Right ventricle myocardium superior (tissue), 1 donor: ENCODE measurements at regions of chr15 and their contacts with region 1.

Region 1: GRCh38 chr15:62071711-62072308 is 5.0 kb downstream of the C2CD4A start:
- DNase-seq: no peak
- ATAC-seq: no peak

Region 2: DNA sequence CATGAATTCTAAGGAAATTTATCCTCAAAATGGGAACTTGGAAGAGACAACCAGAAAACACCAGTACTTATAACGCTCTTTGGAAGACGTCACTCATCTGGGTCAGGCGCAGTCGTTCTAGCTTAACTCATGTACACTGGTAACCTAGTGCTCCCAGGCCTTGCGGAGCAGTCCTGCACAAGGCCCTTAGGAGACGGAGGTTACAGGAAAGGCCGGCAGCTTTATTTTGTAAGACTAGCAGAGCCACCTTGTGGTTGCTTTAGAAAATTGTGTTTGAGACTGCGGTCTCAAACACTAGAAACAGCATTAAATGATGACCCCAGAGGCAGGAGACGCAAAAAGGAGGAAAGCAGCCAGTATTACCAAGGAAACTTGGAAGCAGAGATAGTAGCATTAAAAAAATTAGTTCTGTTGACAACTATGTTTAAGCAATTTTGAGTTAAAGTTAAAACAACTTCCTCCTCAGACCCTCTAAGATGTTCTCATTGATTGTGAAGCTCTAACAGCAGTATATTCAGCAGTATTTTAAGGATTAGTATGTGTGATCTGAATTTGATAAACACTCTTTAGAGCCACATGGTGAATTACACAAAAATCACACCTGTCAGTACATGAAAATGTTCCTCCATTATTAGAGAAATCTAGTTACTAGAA is 235.2 kb after region 1 on chr15:
- intact Hi-C with region 1: loop called (anchors 10 kb)
- DNase-seq: peak; percentile 66
- ATAC-seq: peak; percentile 89